Left colon (tissue), 2 donors: ENCODE measurements at regions of chr10 and their contacts with region 1.

Region 1: GRCh38 chr10:110311357-110311949 is 6.7 kb upstream of the SMNDC1 start:
- DNase-seq: peak; percentile 32 to 70
- ATAC-seq: peak; percentile 85

Region 2: DNA sequence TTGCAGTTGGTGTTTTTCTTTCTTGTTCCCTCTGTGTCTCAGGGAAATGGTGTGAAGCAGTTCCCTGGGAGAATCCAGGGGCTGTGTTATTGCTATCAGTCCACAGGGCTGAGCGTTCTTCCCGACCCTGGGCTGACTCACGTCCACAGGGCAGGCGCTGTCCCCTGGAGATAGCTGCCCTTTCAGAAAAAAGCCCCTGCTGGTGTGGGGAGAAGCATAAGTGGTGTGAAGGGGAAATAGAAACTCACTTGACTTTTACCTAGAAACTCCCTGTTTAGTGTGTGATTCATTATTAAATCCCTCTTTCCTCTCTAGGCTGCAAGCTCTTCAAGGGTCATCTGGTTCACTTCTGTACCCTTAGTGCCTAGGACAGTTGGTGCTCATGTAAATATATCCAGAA is 56.5 kb after region 1 on chr10:
- intact Hi-C with region 1: no loop called
- DNase-seq: no peak
- ATAC-seq: no peak

Region 3: DNA sequence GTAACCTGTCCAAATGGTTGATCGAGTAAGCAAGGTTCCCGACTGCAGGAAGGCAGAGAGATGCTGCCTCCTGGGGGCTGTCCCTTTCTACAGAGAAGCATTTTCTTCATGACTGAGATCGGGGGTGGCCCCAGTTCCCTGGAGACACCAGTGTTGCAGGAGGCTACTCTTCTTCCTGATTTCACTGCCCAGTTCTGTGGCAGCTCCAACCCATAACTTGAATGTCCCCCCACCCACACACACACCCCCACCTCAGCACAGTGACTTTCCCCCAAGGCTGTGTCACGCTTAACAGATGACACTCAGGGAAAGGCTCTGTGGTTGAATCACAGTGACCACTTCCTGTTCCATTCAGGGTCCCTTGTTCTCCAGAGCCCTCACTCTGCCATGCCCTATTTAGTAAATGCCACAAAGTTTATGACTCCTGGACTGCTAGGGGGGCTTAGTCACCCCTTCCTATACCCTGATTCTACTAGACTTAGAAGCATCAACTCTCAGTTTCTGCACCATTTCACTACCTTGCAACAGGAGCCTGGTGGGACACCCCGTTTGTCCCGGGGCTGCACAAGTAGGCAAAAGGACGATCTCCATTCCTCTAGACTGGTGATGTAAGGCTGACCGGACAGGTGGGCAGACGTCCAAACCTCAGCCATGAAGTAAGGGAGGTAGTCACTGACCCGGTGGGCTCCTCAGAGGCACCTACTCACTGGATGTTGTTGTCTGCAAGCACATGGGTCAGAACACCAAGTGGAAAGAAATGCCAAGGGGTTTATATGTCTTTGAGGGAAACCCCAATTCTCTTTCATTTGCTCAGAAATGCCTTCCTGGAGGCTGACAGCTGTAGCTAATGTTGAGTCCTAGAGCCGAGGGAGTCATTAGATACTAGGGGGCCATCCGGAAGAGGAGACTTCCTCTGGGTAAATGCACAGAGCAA is 224.8 kb after region 1 on chr10:
- intact Hi-C with region 1: loop called in 1 of 2 experiments (anchors 10 kb)
- DNase-seq: peak in 1 of 2 donors; percentile 27
- ATAC-seq: peak; percentile 34

Region 4: DNA sequence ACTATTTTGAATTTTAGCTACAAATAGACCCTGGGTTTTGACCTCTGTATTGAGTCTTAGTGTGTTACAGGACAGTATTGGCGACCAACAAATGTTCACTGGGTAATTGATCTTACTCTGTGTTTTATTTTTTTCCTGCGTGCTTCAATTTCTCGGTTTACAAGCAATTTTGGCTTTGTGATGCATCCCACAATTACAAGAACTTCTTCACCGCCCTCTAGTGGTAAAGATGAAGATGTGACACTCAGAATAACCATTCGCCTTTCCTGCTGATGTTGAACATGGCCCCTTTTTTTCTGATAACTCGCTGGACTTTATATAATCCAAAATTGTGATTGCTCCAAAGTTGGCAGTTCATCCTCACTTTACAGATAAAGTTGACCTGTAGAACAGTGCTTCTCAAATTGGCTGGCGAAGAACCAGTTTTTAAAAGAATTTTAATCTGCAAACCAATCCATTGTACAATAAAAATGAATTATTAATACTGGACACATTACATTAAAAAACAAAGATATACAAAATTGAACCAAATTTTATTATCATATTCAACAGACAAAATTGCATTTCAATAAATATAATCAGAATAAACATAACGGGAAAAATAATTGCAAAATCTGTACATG is 235.8 kb after region 1 on chr10:
- intact Hi-C with region 1: loop called in 1 of 2 experiments (anchors 5 kb)
- DNase-seq: no peak
- ATAC-seq: peak; percentile 61

Region 5: GRCh38 chr10:110584006-110584405 is 272.6 kb after region 1 on chr10:
- intact Hi-C with region 1: no loop called
- DNase-seq: no peak
- ATAC-seq: no peak